Sciatic nerve (tissue), 2 donors: ENCODE measurements at regions of chr20 and their contacts with region 1.

Region 1: DNA sequence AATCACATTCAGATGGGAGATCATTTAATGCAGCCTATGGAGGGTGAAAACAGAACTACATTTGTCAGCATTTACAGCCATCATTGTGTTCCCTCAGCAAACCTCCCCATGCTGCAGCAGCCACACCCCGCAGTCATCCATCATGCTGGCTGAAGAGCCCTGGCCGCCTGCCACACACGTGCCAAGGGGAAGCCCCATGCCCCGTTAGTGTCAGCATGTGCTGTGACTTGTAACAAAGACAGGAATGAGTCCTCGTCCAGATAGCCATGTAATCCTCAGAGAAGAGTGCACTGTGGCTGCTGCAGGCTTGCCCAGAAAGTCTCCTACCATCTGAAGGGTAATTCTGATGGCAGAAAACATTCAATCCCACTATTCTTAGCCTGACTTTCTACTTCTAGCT is 1097.8 kb downstream of the KIF16B start:
- DNase-seq: peak; percentile 63
- ATAC-seq: peak; percentile 45

Region 2: DNA sequence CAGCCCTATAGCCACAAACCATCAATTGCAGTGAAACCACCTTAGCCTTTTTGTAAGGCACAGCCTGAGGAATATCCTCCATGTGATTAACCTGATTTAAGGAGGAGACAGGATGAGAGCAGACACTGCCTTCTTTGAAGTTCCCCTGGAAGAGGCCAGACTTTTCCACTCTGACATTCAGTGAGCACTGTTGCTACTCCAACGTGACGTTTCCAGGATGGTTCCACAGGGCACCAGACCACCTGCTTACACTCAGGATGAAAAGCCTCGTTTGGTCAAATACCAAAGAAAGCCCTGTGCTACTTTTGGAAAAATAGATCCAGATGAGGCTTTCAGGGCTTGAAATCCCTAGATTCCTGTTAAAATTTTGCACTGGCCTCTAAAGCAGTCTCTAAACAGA is 35.9 kb before region 1 on chr20:
- intact Hi-C with region 1: loop called (anchors 2 kb)
- DNase-seq: no peak
- ATAC-seq: no peak